A673 (cell line): ENCODE measurements at regions of chr2 and their contacts with region 1.

Region 1: GRCh38 chr2:21042958-21043743 is 722 bp downstream of the APOB start:
- DNase-seq: peak; percentile 44
- H3K4me3 ChIP-seq: no peak overlapping the region
- H3K27ac ChIP-seq: no peak overlapping the region
- H3K4me1 ChIP-seq: no peaks in the 10 kb centered on the region
- H3K27me3 ChIP-seq: peaks cover 88% of the 10 kb centered on the region
- CTCF ChIP-seq: peak; percentile 97

Region 2: GRCh38 chr2:21118302-21118920 is 75.3 kb after region 1 on chr2:
- CTCF ChIA-PET with region 1: no interaction called
- POLR2A ChIA-PET with region 1: no interaction called
- intact Hi-C with region 1: loop called (anchors 1 kb)
- DNase-seq: peak; percentile 37
- H3K4me3 ChIP-seq: no peak overlapping the region
- H3K27ac ChIP-seq: no peak overlapping the region
- H3K4me1 ChIP-seq: no peaks in the 10 kb centered on the region
- H3K27me3 ChIP-seq: peaks cover 28% of the 10 kb centered on the region
- CTCF ChIP-seq: peak; percentile 64

Region 3: DNA sequence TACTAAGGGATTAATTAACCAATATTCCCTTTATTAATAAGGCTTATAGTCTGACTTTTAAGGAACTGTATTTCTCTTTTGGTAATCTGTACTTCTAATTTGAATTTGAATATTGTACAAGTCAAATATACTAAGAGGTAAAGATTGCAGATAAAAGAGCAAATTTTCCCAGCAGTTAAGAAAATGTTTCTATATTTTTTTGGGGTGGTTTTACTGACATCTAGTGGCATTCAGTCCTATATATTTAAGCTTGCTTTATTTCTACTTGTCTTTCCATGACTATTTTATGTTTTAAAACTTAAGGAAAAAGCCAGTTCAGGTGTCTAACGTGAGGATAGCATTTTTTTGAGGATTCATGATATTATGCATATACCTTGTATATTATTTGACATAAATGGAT is 122.2 kb after region 1 on chr2:
- CTCF ChIA-PET with region 1: no interaction called
- POLR2A ChIA-PET with region 1: no interaction called
- intact Hi-C with region 1: loop called (anchors 5 kb)
- DNase-seq: no peak
- H3K4me3 ChIP-seq: no peak overlapping the region
- H3K27ac ChIP-seq: no peak overlapping the region
- H3K4me1 ChIP-seq: no peaks in the 10 kb centered on the region
- H3K27me3 ChIP-seq: no peaks in the 10 kb centered on the region
- CTCF ChIP-seq: peak; percentile 38; the same call in 1 of the 2 replicates

Region 4: DNA sequence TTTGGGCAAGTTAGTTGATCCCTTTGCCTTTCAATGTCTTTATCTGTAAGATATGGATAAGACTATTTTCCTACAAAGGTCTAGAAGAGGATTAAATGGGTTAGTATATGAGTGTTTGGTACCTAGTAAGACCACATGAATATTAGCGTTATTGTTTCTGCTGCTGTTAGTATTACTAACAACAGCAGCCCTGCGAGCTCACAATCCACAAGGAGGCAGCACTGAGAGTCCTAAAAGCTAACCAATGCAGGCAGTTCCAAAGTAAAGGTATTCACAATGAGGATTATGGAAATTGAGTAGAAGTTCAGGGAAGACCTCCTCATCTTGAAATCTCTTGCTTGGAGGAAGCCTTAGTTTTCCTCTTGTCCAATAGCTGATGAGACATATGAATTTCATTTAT is 329.5 kb after region 1 on chr2:
- CTCF ChIA-PET with region 1: no interaction called
- POLR2A ChIA-PET with region 1: no interaction called
- intact Hi-C with region 1: no loop called
- DNase-seq: peak; percentile 46
- H3K4me3 ChIP-seq: no peak overlapping the region
- H3K27ac ChIP-seq: no peak overlapping the region
- H3K4me1 ChIP-seq: no peaks in the 10 kb centered on the region
- H3K27me3 ChIP-seq: peaks cover 4% of the 10 kb centered on the region
- CTCF ChIP-seq: peak; percentile 68